ENCODE measurements at regions of chr3 and their contacts with region 1.

Region 1: GRCh38 chr3:87350364-87351199 is 74.2 kb upstream of the POU1F1 start:
- DNase-seq: peak; percentile 47
- ATAC-seq: peak; percentile 90
- H3K4me3 ChIP-seq: no peak overlapping the region
- H3K27ac ChIP-seq: no peak overlapping the region
- H3K4me1 ChIP-seq: no peaks in the 10 kb centered on the region
- H3K27me3 ChIP-seq: no peaks in the 10 kb centered on the region
- CTCF ChIP-seq: peak; percentile 77
- POLR2A ChIP-seq: no peak
- RAD21 ChIP-seq: peak; percentile 68

Region 2: GRCh38 chr3:88113311-88114162 is 763.0 kb after region 1 on chr3:
- CTCF ChIA-PET with region 1: interaction called, 3 read pairs
- POLR2A ChIA-PET with region 1: no interaction called
- dilution Hi-C with region 1: no loop called
- in situ Hi-C with region 1: no loop called
- intact Hi-C with region 1: loop called (anchors 2 kb)
- DNase-seq: peak; percentile 70
- ATAC-seq: peak; percentile 96
- H3K4me3 ChIP-seq: no peak overlapping the region
- H3K27ac ChIP-seq: no peak overlapping the region
- H3K4me1 ChIP-seq: no peaks in the 10 kb centered on the region
- H3K27me3 ChIP-seq: no peaks in the 10 kb centered on the region
- CTCF ChIP-seq: peak; percentile 74
- POLR2A ChIP-seq: no peak
- RAD21 ChIP-seq: peak; percentile 69

Region 3: DNA sequence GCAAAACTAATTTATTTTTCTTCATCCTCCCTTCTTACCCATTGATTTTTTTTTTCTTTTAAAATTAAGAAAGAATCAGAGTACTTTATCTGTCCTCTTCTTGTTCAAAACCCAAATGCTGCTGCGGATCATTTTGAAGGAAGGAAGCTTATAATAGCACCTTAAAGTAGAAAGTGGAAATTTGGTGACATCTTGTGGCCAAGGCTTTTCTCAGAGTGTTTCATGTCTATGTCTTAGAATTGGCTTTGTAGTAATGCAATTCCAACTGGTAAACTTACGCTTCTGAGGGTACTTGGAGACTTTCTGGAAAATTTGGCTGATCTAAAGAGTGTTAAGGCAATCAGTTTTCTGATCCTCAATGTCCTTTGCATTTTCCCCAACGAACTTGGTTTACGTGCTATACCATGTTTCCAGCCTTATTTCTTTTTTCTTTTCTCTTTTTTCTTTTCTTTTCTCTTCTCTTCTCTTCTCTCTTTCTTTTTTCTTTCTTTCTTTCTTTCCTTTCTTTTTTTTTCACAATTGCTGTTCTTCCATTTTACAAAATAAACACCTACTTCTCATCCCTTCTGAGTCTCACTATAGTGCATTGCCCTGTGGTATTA is 829.9 kb after region 1 on chr3:
- CTCF ChIA-PET with region 1: interaction called, 3 read pairs
- POLR2A ChIA-PET with region 1: no interaction called
- dilution Hi-C with region 1: no loop called
- in situ Hi-C with region 1: no loop called
- intact Hi-C with region 1: loop called (anchors 1 kb)
- DNase-seq: peak; percentile 58
- ATAC-seq: peak; percentile 75
- H3K4me3 ChIP-seq: no peak overlapping the region
- H3K27ac ChIP-seq: no peak overlapping the region
- H3K4me1 ChIP-seq: no peaks in the 10 kb centered on the region; the same call in 1 of the 2 replicates
- H3K27me3 ChIP-seq: no peaks in the 10 kb centered on the region
- CTCF ChIP-seq: peak; percentile 60
- POLR2A ChIP-seq: no peak
- RAD21 ChIP-seq: peak; percentile 71

Measured in IMR-90 (cell line).